Left lung (tissue), 14 donors: ENCODE measurements at regions of chr11 and their contacts with region 1.

Region 1: DNA sequence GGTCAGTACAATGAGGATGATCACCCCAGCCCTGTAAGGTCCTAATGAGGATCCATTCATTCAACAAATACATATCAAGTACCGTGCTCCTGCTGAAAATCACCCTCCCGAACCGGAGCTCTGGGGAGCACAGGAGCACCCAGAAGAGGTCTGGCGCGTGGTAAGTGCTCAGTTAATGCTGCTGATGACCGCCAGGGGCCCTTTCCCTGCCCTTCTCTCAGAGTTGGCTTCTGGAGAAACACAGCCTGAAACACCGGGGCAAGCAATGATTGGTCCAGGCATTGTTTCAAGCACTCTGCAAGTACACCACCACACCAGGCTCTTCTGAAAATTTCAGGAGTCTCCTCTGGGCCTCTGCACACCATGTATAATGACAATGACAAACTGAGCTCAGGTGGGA is 3.8 kb upstream of the CCDC86 start:
- DNase-seq: no peak
- ATAC-seq: no peak
- H3K4me3 ChIP-seq: no peak overlapping the region
- H3K27ac ChIP-seq: no peak overlapping the region
- H3K4me1 ChIP-seq: peaks cover 16 to 35% of the 10 kb centered on the region in 2 donors
- H3K27me3 ChIP-seq: peaks cover 5 to 29% of the 10 kb centered on the region in 2 donors
- CTCF ChIP-seq: no peak

Region 2: GRCh38 chr11:60899046-60899936 is 61.2 kb after region 1 on chr11:
- intact Hi-C with region 1: loop called in 1 of 2 experiments (anchors 5 kb)
- DNase-seq: peak in 1 of 4 donors; percentile 58
- ATAC-seq: peak; percentile 88
- H3K4me3 ChIP-seq: no peak overlapping the region
- H3K27ac ChIP-seq: no peak overlapping the region
- H3K4me1 ChIP-seq: peaks cover 0 to 8% of the 10 kb centered on the region in 2 donors
- H3K27me3 ChIP-seq: no peaks in the 10 kb centered on the region
- CTCF ChIP-seq: peak; percentile 89 to 97

Region 3: GRCh38 chr11:60951899-60952741 is 114.0 kb after region 1 on chr11 and contains the start of gene SLC15A3:
- intact Hi-C with region 1: no loop called
- DNase-seq: peak; percentile 56 to 91 (median 78)
- ATAC-seq: peak; percentile 79
- H3K4me3 ChIP-seq: peak within 1 kb of the TSS; percentile 36 to 64
- H3K27ac ChIP-seq: peak within 1 kb of the TSS; percentile 92 to 96
- H3K4me1 ChIP-seq: peaks cover 3 to 70% of the 10 kb centered on the region in 2 donors
- H3K27me3 ChIP-seq: peaks cover 0 to 10% of the 10 kb centered on the region in 2 donors
- CTCF ChIP-seq: no peak
- polyA plus RNA-seq, gene SLC15A3: 13.8 to 23.1 (median 17.2) TPM